ENCODE measurements at regions of chr19 and their contacts with region 1.

Region 1: DNA sequence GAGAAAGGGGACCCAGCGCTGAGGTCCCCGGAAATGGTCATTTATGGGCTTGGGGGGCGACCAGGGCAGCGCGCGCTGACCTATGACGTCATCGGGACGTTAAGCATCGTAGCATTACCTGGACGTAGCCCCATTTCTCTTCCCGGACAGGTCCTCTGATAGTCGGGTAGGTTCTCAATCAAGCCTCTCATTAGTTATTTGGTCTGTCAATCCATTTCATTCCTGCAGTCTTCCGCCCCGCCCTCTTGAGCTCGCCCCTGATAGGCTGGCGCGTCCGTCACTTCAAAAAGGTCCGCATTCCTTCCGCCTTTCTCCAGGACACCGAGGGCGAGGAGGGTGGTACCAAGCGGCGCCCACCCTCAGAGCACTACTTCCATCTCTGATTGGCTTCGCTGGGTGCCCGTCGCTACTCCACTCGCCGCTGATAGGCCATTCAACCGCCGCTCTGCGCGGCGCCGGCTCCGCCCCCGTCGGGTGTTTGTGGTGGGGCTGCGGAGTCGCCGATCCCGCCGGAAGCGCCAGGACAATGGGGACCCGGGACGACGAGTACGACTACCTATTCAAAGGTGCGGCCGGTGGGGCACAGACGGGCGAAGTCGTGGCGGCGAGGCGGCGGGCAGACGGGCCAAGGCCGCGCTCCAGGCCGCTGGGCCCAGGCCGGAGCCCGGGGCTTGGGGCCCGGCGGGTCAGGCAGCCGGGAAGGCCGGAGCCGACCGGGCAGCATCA is at the start of gene RAB11B:
- DNase-seq: peak; percentile 95 to 99
- ATAC-seq: peak; percentile 85 to 96 (median 87)
- H3K4me3 ChIP-seq: peak within 1 kb of the TSS; percentile 49
- H3K4me3 Mint-ChIP-seq: peak within 1 kb of the TSS; percentile 98
- H3K27ac ChIP-seq: peak within 1 kb of the TSS; percentile 92
- H3K27ac Mint-ChIP-seq: peak within 1 kb of the TSS; percentile 94
- H3K4me1 ChIP-seq: peaks cover 34% of the 10 kb centered on the region
- H3K4me1 Mint-ChIP-seq: peaks cover 16 to 33% of the 10 kb centered on the region in 2 donors
- H3K27me3 ChIP-seq: no peaks in the 10 kb centered on the region
- H3K27me3 Mint-ChIP-seq: no peaks in the 10 kb centered on the region
- CTCF ChIP-seq: no peak
- total RNA-seq, gene RAB11B: 101 to 116 (median 108) TPM

Region 2: DNA sequence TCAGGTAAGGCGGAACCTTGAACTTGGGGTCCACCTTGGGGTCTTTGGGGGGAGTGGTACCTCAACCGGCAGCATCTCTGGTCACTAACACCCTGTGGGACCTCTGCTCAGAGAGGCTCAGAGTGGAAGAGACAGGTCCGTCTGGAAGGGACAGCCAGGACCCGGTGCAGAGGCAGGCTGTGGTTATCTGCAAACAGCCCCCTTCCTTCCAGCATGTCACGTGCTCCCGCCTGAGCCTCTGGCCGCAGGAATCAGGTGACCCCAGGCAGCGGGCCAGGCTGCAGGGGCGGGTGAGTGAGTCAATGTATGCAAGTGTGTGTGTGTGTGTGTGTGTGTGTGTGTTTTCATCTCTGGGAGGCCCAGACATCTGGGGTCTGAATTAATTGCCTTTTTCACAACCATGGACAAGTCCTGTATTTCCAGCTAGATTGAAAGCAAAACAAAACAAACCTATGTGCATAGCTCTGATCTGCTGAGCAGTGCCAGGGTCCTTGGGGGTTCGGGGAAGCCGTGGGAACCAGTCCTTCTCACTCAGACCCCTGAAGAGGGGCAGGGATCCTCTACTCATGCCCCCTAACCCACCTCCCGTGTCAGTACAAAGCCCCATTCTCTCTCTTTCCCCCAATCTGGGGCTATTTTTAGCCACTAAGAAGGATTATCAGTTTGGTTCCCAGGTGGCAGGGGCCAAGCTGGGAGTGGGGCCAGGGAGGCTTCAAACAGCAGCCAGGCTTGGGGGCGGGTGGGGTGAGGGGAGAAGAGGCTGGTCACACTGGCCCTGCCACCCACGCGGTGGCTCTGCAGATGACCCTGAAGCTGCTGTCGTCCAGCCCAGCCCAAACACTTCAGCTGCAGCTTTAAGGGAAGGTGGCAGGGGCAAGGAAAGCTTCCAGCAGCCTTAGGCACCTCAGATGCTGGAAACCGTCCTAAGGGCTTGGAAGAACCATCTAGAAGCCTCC is 149.5 kb before region 1 on chr19:
- intact Hi-C with region 1: no loop called
- DNase-seq: peak; percentile 68 to 74
- ATAC-seq: peak; percentile 93 to 99 (median 95)
- H3K4me3 ChIP-seq: no peak overlapping the region
- H3K4me3 Mint-ChIP-seq: peak overlapping the region; percentile 88
- H3K27ac ChIP-seq: peak overlapping the region; percentile 75
- H3K27ac Mint-ChIP-seq: peak overlapping the region; percentile 93 to 95
- H3K4me1 ChIP-seq: peaks cover 26% of the 10 kb centered on the region
- H3K4me1 Mint-ChIP-seq: peaks cover 33 to 48% of the 10 kb centered on the region in 2 donors
- H3K27me3 ChIP-seq: no peaks in the 10 kb centered on the region
- H3K27me3 Mint-ChIP-seq: no peaks in the 10 kb centered on the region
- CTCF ChIP-seq: no peak

Region 3: GRCh38 chr19:8505680-8506401 is 115.8 kb after region 1 on chr19:
- intact Hi-C with region 1: no loop called
- DNase-seq: peak; percentile 63 to 79
- ATAC-seq: peak; percentile 57 to 68 (median 65)
- H3K4me3 ChIP-seq: peak overlapping the region; percentile 60
- H3K4me3 Mint-ChIP-seq: peak overlapping the region; percentile 93
- H3K27ac ChIP-seq: no peak overlapping the region
- H3K27ac Mint-ChIP-seq: peak overlapping the region in 1 of 2 donors; percentile 78
- H3K4me1 ChIP-seq: peaks cover 60% of the 10 kb centered on the region
- H3K4me1 Mint-ChIP-seq: peaks cover 10 to 30% of the 10 kb centered on the region in 2 donors
- H3K27me3 ChIP-seq: no peaks in the 10 kb centered on the region
- H3K27me3 Mint-ChIP-seq: no peaks in the 10 kb centered on the region
- CTCF ChIP-seq: peak; percentile 68

Region 4: GRCh38 chr19:8592231-8593009 is 202.4 kb after region 1 on chr19:
- intact Hi-C with region 1: loop called (anchors 1 kb)
- DNase-seq: peak; percentile 97 to 99
- ATAC-seq: peak; percentile 86 to 94 (median 87)
- H3K4me3 ChIP-seq: peak overlapping the region; percentile 30
- H3K4me3 Mint-ChIP-seq: peak overlapping the region; percentile 82
- H3K27ac ChIP-seq: no peak overlapping the region
- H3K27ac Mint-ChIP-seq: peak overlapping the region; percentile 72 to 81
- H3K4me1 ChIP-seq: peaks cover 21% of the 10 kb centered on the region
- H3K4me1 Mint-ChIP-seq: peaks cover 24 to 38% of the 10 kb centered on the region in 2 donors
- H3K27me3 ChIP-seq: no peaks in the 10 kb centered on the region
- H3K27me3 Mint-ChIP-seq: no peaks in the 10 kb centered on the region
- CTCF ChIP-seq: no peak

Region 5: GRCh38 chr19:8794823-8795222 is 404.8 kb after region 1 on chr19:
- intact Hi-C with region 1: no loop called
- DNase-seq: no peak
- ATAC-seq: no peak
- H3K4me3 ChIP-seq: no peak overlapping the region
- H3K4me3 Mint-ChIP-seq: no peak overlapping the region
- H3K27ac ChIP-seq: no peak overlapping the region
- H3K27ac Mint-ChIP-seq: no peak overlapping the region
- H3K4me1 ChIP-seq: no peaks in the 10 kb centered on the region
- H3K4me1 Mint-ChIP-seq: no peaks in the 10 kb centered on the region
- H3K27me3 ChIP-seq: no peaks in the 10 kb centered on the region
- H3K27me3 Mint-ChIP-seq: no peaks in the 10 kb centered on the region
- CTCF ChIP-seq: no peak

Measured in natural killer cell (primary cell).